IMR-90 (cell line): ENCODE measurements at regions of chr3 and their contacts with region 1.

Region 1: GRCh38 chr3:141561426-141562034 is 74.7 kb downstream of the RASA2 start:
- DNase-seq: peak; percentile 80
- ATAC-seq: peak; percentile 77
- H3K4me3 ChIP-seq: no peak overlapping the region
- H3K27ac ChIP-seq: no peak overlapping the region
- H3K4me1 ChIP-seq: no peaks in the 10 kb centered on the region; the same call in 1 of the 2 replicates
- H3K27me3 ChIP-seq: no peaks in the 10 kb centered on the region
- CTCF ChIP-seq: peak; percentile 99
- POLR2A ChIP-seq: 0 out of 2 replicates have a peak, but pooled peaks have one; percentile 45
- RAD21 ChIP-seq: peak; percentile 98

Region 2: GRCh38 chr3:141192345-141192744 is 369.2 kb before region 1 on chr3:
- CTCF ChIA-PET with region 1: no interaction called
- POLR2A ChIA-PET with region 1: no interaction called
- dilution Hi-C with region 1: no loop called
- in situ Hi-C with region 1: no loop called
- intact Hi-C with region 1: loop called (anchors 1 kb)
- DNase-seq: peak; percentile 91
- ATAC-seq: peak; percentile 100
- H3K4me3 ChIP-seq: no peak overlapping the region
- H3K27ac ChIP-seq: no peak overlapping the region
- H3K4me1 ChIP-seq: no peaks in the 10 kb centered on the region
- H3K27me3 ChIP-seq: peaks cover 20% of the 10 kb centered on the region
- CTCF ChIP-seq: peak; percentile 99
- POLR2A ChIP-seq: no peak
- RAD21 ChIP-seq: peak; percentile 93

Region 3: GRCh38 chr3:141303481-141304223 is 257.9 kb before region 1 on chr3:
- CTCF ChIA-PET with region 1: interaction called, 8 read pairs
- POLR2A ChIA-PET with region 1: no interaction called
- dilution Hi-C with region 1: no loop called
- in situ Hi-C with region 1: no loop called
- intact Hi-C with region 1: loop called (anchors 2 kb)
- DNase-seq: peak; percentile 86
- ATAC-seq: peak; percentile 62
- H3K4me3 ChIP-seq: no peak overlapping the region
- H3K27ac ChIP-seq: no peak overlapping the region
- H3K4me1 ChIP-seq: peaks cover 6% of the 10 kb centered on the region
- H3K27me3 ChIP-seq: no peaks in the 10 kb centered on the region
- CTCF ChIP-seq: peak; percentile 85
- POLR2A ChIP-seq: no peak
- RAD21 ChIP-seq: peak; percentile 73

Region 4: GRCh38 chr3:141360888-141361598 is 200.5 kb before region 1 on chr3:
- CTCF ChIA-PET with region 1: interaction called, 3 read pairs
- POLR2A ChIA-PET with region 1: no interaction called
- dilution Hi-C with region 1: no loop called
- in situ Hi-C with region 1: no loop called
- intact Hi-C with region 1: loop called (anchors 2 kb)
- DNase-seq: peak; percentile 90
- ATAC-seq: peak; percentile 88
- H3K4me3 ChIP-seq: peak overlapping the region; percentile 15; the same call in 1 of the 2 replicates
- H3K27ac ChIP-seq: peak overlapping the region; percentile 85
- H3K4me1 ChIP-seq: peaks cover 7% of the 10 kb centered on the region
- H3K27me3 ChIP-seq: no peaks in the 10 kb centered on the region
- CTCF ChIP-seq: peak; percentile 84
- POLR2A ChIP-seq: 0 out of 2 replicates have a peak, but pooled peaks have one; percentile 21
- RAD21 ChIP-seq: peak; percentile 90

Region 5: DNA sequence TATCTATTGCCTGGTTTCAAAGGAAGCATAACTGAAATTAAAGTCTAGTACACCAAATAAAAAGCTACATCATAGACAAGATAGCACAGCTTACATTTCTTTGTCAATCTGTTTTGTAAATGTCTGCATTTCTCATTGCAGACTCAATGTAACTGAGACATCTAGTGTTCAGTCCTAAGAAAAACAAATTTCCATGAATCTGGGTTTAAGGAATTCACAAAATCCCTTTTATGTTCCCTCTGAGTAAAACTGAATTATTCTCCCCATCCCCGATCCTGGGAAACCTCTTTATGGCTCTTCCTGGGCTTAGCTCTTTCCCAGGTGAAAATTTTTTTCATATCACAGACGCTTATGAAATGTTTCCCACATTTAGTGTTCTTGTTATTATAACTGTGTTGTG is 96.3 kb before region 1 on chr3:
- CTCF ChIA-PET with region 1: interaction called, 41 read pairs
- POLR2A ChIA-PET with region 1: no interaction called
- dilution Hi-C with region 1: no loop called
- in situ Hi-C with region 1: loop called (anchors 5 kb)
- intact Hi-C with region 1: loop called (anchors 1 kb)
- DNase-seq: peak; percentile 51
- ATAC-seq: peak; percentile 87
- H3K4me3 ChIP-seq: no peak overlapping the region
- H3K27ac ChIP-seq: no peak overlapping the region
- H3K4me1 ChIP-seq: no peaks in the 10 kb centered on the region
- H3K27me3 ChIP-seq: no peaks in the 10 kb centered on the region
- CTCF ChIP-seq: peak; percentile 41
- POLR2A ChIP-seq: no peak
- RAD21 ChIP-seq: peak; percentile 39